Activated CD4-positive, alpha-beta T cell treated with anti-CD3 and anti-CD28 coated beads for 36 hours (primary cell): ENCODE measurements at regions of chr6 and their contacts with region 1.

Region 1: DNA sequence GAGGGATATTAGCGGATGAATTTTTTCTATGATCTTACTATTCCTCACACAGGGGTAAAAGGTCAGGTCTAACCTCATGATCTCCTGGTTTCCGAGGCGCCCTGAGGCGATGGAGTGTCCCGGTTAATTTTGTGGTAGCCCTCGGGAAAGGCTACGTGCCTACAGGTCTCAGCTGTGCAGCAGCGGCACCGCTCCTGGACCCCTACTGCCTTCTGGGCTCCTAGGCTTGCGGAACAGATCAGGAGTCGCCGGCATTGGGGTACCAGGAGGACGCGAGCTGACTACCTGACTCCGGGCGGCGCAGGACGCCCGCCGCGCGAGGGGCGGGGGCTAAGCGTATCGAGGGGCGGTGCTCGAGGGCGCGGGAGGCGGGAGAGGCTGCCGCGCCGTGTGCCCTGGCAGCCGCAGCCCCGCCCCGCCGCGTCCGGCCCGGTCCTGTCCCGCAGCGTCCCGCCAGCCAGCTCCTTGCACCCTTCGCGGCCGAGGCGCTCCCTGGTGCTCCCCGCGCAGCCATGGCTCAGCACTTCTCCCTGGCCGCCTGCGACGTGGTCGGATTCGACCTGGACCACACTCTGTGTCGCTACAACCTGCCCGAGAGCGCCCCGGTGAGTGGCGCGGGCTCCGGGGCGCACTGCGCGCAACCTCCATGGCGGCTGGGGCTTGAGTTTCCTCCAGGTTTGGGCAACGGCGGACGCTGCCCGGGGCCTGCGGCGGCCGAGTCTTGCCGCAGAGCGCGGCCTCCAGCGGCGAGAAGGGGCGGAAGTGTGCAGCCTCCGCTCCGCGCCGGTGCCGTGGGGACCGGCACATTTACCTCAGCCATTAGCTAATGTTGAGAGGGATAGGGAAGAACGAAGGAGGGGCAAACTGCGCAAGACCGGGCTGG is at the start of gene NT5DC1:
- DNase-seq: peak; percentile 92
- ATAC-seq: peak; percentile 93
- H3K4me3 Mint-ChIP-seq: peak within 1 kb of the TSS; percentile 86
- H3K27ac Mint-ChIP-seq: peak within 1 kb of the TSS; percentile 88
- H3K4me1 Mint-ChIP-seq: peaks cover 50% of the 10 kb centered on the region
- H3K27me3 Mint-ChIP-seq: no peaks in the 10 kb centered on the region
- total RNA-seq, gene NT5DC1: 39.4 to 42.4 TPM

Region 2: GRCh38 chr6:116010790-116011401 is 89.8 kb before region 1 on chr6:
- CTCF ChIA-PET with region 1: interaction called, 14 read pairs
- POLR2A ChIA-PET with region 1: interaction called, 7 read pairs
- intact Hi-C with region 1: loop called (anchors 1 kb)
- DNase-seq: peak; percentile 71
- ATAC-seq: no peak
- H3K4me3 Mint-ChIP-seq: no peak overlapping the region
- H3K27ac Mint-ChIP-seq: no peak overlapping the region
- H3K4me1 Mint-ChIP-seq: peaks cover 12% of the 10 kb centered on the region
- H3K27me3 Mint-ChIP-seq: peaks cover 19% of the 10 kb centered on the region

Region 3: GRCh38 chr6:116253505-116254296 is 153.0 kb after region 1 on chr6 and contains the start of gene TSPYL4:
- CTCF ChIA-PET with region 1: no interaction called
- POLR2A ChIA-PET with region 1: no interaction called
- intact Hi-C with region 1: loop called in 1 of 2 experiments (anchors 2 kb)
- DNase-seq: peak; percentile 95
- ATAC-seq: peak; percentile 99
- H3K4me3 Mint-ChIP-seq: no peak within 1 kb of the TSS
- H3K27ac Mint-ChIP-seq: no peak within 1 kb of the TSS
- H3K4me1 Mint-ChIP-seq: peaks cover 19% of the 10 kb centered on the region
- H3K27me3 Mint-ChIP-seq: no peaks in the 10 kb centered on the region
- total RNA-seq, gene TSPYL4: 9.4 to 10.8 TPM

Region 4: DNA sequence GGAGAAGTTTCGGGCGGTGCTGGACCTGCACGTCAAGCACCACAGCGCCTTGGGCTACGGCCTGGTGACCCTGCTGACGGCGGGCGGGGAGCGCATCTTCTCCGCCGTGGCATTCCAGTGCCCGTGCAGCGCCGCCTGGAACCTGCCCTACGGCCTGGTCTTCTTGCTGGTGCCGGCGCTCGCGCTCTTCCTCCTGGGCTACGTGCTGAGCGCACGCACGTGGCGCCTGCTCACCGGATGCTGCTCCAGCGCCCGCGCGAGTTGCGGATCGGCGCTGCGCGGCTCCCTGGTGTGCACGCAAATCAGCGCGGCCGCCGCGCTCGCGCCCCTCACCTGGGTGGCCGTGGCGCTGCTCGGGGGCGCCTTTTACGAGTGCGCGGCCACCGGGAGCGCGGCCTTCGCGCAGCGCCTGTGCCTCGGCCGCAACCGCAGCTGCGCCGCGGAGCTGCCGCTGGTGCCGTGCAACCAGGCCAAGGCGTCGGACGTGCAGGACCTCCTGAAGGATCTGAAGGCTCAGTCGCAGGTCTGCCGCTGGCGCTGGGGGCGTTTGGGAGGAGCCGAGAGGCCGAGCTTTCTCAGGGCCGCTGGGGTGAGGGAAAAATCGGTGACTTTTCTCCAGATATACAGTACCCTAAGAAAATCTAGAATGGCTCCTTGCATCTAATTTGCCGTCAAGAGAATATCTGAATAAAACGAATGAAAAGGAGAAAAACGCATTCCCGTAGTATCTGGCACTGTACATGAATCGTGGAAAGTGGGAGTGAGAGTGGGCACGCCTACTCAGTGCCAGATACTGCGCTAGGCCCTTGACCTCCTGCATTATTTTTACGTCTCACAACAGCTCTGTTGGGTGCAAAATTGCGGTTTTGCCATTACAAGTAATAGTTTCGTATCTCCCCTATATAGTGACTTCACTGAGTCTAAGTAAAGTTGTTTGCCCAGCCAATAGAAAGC is 361.5 kb after region 1 on chr6:
- CTCF ChIA-PET with region 1: no interaction called
- POLR2A ChIA-PET with region 1: no interaction called
- intact Hi-C with region 1: loop called in 1 of 2 experiments (anchors 5 kb)
- DNase-seq: peak; percentile 80
- ATAC-seq: peak; percentile 90
- H3K4me3 Mint-ChIP-seq: peak overlapping the region; percentile 57
- H3K27ac Mint-ChIP-seq: peak overlapping the region; percentile 79
- H3K4me1 Mint-ChIP-seq: peaks cover 34% of the 10 kb centered on the region
- H3K27me3 Mint-ChIP-seq: peaks cover 31% of the 10 kb centered on the region

Region 5: DNA sequence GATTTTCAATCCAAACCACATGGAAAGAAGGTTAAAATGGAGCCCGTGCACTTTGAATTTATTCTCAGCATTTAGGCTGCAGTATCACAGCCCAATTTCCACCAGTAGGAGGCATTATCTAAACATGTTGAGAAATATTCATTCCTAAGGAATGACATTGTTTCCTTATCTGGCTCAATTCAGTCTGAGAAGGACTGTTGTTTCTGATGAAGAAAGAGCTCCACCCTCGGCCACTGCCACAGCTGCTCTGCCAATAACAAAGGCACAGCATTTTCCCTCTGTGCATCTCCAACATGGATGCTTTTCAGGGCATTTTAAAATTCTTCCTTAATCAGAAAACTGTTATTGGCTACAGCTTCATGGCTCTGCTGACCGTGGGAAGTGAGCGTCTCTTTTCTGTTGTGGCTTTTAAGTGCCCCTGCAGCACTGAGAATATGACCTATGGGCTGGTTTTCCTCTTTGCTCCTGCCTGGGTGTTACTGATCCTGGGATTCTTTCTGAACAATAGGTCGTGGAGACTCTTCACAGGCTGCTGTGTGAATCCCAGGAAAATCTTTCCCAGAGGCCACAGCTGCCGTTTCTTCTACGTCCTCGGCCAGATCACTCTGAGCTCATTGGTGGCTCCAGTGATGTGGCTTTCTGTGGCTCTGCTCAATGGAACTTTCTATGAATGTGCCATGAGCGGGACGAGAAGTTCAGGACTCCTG is 410.9 kb after region 1 on chr6 and contains the start of gene CALHM5:
- CTCF ChIA-PET with region 1: no interaction called
- POLR2A ChIA-PET with region 1: no interaction called
- intact Hi-C with region 1: no loop called
- DNase-seq: no peak
- ATAC-seq: no peak
- H3K4me3 Mint-ChIP-seq: no peak within 1 kb of the TSS
- H3K27ac Mint-ChIP-seq: no peak within 1 kb of the TSS
- H3K4me1 Mint-ChIP-seq: no peaks in the 10 kb centered on the region
- H3K27me3 Mint-ChIP-seq: no peaks in the 10 kb centered on the region
- total RNA-seq, gene CALHM5: not detected

Region 6: GRCh38 chr6:116680975-116681808 is 580.5 kb after region 1 on chr6 and contains the start of gene KPNA5:
- CTCF ChIA-PET with region 1: no interaction called
- POLR2A ChIA-PET with region 1: no interaction called
- intact Hi-C with region 1: loop called in 1 of 2 experiments (anchors 5 kb)
- DNase-seq: peak; percentile 96
- ATAC-seq: peak; percentile 96
- H3K4me3 Mint-ChIP-seq: peak within 1 kb of the TSS; percentile 98
- H3K27ac Mint-ChIP-seq: peak within 1 kb of the TSS; percentile 99
- H3K4me1 Mint-ChIP-seq: peaks cover 31% of the 10 kb centered on the region
- H3K27me3 Mint-ChIP-seq: no peaks in the 10 kb centered on the region
- total RNA-seq, gene KPNA5: 10.4 to 13.6 TPM